HCT116 (cell line): ENCODE measurements at regions of chr17 and their contacts with region 1.

Region 1: GRCh38 chr17:78140169-78140976 is 5.8 kb upstream of the C17orf99 start:
- DNase-seq: peak; percentile 100
- ATAC-seq: peak; percentile 79
- H3K4me3 ChIP-seq: peak overlapping the region; percentile 37 to 53
- H3K27ac ChIP-seq: peak overlapping the region; percentile 75
- H3K4me1 ChIP-seq: peaks cover 57 to 82% of the 10 kb centered on the region in 2 experiments
- H3K27me3 ChIP-seq: no peaks in the 10 kb centered on the region
- CTCF ChIP-seq: no peak
- POLR2A ChIP-seq: no peak
- RAD21 ChIP-seq: no peak

Region 2: GRCh38 chr17:78128551-78129350 is 11.6 kb before region 1 on chr17 and contains the start of gene TMC6:
- CTCF ChIA-PET with region 1: interaction called, 9 read pairs
- POLR2A ChIA-PET with region 1: interaction called, 35 read pairs
- RAD21 ChIA-PET with region 1: interaction called in 1 of 2 experiments, 6 read pairs
- intact Hi-C with region 1: no loop called
- DNase-seq: peak; percentile 64
- ATAC-seq: peak; percentile 81
- H3K4me3 ChIP-seq: peak within 1 kb of the TSS; percentile 89 to 92
- H3K27ac ChIP-seq: peak within 1 kb of the TSS; percentile 95
- H3K4me1 ChIP-seq: peaks cover 39 to 62% of the 10 kb centered on the region in 2 experiments
- H3K27me3 ChIP-seq: no peaks in the 10 kb centered on the region
- CTCF ChIP-seq: no peak
- POLR2A ChIP-seq: peak; percentile 19
- RAD21 ChIP-seq: no peak
- total RNA-seq, gene TMC6: 142 TPM

Region 3: DNA sequence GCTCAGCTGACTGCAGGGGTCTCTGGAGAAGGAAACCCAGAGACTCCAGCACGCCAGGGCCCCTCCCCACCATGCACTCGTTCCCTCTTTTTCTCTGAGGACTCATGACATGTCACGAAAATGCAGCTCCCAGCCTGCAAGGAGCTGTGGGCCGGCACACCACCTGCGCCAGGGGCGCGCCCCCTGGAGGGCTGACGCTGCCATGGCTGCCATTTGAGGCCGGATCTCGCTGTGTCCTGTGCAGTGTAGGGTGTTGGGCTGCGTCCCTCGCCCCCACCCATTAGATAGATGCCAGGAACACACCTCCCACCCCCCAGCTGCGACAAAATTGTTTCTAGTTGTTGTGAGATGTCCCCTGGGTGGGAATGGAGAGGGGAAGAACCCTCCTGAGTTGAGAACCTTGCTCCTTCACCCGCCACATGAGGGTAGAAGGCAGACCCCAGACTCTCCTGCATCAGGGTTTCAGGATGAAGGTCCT is 36.2 kb after region 1 on chr17:
- CTCF ChIA-PET with region 1: interaction called, 11 read pairs
- POLR2A ChIA-PET with region 1: interaction called, 4 read pairs
- RAD21 ChIA-PET with region 1: interaction called in 1 of 2 experiments, 3 read pairs
- intact Hi-C with region 1: no loop called
- DNase-seq: no peak
- ATAC-seq: peak; percentile 78
- H3K4me3 ChIP-seq: no peak overlapping the region
- H3K27ac ChIP-seq: peak overlapping the region; percentile 20
- H3K4me1 ChIP-seq: peaks cover 12 to 30% of the 10 kb centered on the region in 2 experiments; a peak in 3 of 4 replicates
- H3K27me3 ChIP-seq: no peaks in the 10 kb centered on the region
- CTCF ChIP-seq: peak; percentile 81 to 99 (median 99); a peak in 5 of 6 replicates
- POLR2A ChIP-seq: no peak
- RAD21 ChIP-seq: peak; percentile 87

Region 4: DNA sequence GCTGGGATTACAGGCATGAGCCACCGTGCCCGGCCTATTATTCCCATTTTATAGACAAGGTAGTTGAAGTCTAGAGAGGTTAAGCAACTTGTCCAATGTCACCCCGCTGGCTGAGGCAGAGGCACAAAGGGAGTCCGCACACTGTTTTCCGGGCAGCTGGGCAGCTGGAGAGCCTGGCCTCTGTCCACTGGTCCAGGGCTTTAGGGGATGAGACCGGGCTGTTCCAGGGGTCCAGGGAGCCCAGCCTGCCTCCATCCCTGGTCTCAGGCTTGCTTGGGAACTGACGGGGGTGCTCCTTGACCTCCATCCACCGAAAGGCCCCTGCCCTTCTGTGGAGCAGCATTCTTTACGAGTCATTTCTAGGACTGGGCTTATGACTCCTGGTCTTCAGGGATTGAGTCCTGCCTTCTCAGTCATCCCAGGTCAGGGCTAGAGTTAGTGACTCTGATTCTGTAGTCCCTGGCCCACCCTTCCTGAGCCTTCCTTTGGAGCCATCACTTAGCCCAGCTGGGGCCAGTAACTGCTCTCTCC is 182.0 kb after region 1 on chr17:
- CTCF ChIA-PET with region 1: no interaction called
- POLR2A ChIA-PET with region 1: no interaction called
- RAD21 ChIA-PET with region 1: no interaction called
- intact Hi-C with region 1: no loop called
- DNase-seq: no peak
- ATAC-seq: no peak
- H3K4me3 ChIP-seq: no peak overlapping the region; a peak in 1 of 4 replicates
- H3K27ac ChIP-seq: no peak overlapping the region; the same call in 1 of the 2 replicates
- H3K4me1 ChIP-seq: peaks cover 27 to 68% of the 10 kb centered on the region in 2 experiments
- H3K27me3 ChIP-seq: no peaks in the 10 kb centered on the region
- CTCF ChIP-seq: no peak
- POLR2A ChIP-seq: no peak
- RAD21 ChIP-seq: no peak